RWPE1 (cell line): ENCODE measurements at regions of chr10 and their contacts with region 1.

Region 1: DNA sequence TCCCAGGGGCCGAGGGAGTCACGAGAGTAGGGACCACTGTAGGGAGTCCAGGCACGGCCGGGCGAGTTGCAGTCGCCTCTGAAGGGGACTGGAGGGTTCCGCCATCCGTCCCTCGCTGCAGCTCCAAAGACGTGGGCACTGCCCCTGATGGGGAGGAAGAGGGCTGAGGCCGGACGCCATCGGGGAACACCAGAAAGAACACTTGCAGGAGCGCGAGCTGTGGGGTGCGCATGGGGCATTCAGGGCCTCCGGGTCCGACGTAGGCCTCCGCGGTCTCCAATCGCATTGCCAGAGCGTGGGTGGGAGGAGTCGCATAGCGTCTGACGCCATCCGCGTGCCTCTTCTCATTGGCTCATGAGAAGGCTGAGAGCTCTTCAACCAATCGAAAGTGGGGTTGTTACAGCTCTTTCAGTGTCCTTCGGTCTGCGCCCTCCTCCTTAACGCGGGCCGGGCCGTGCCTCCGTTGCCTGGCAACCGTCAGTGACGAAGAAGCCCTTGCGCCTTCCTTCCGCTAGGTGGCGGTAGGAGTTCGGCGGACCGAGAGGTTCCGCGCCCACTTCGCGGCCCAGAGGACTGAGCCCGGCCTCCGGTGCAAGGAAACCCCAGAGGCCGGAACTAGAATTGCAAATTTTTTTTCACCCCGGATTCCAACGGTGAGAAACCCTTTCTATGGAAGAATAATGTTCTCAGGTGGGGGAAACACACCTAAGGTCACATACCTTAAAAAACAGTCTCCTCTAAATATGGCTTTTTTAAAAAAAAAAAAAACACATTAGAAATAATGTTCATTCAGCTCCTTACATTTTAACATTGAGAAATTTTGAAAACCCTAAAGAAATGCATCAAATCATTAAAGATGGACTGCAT is at the start of gene TCTN3:
- DNase-seq: peak; percentile 100
- H3K27ac ChIP-seq: peak within 1 kb of the TSS; percentile 65
- CTCF ChIP-seq: peak; percentile 97

Region 2: GRCh38 chr10:95440756-95441546 is 252.9 kb before region 1 on chr10:
- CTCF ChIA-PET with region 1: no interaction called
- POLR2A ChIA-PET with region 1: no interaction called
- DNase-seq: no peak
- H3K27ac ChIP-seq: no peak overlapping the region
- CTCF ChIP-seq: no peak

Region 3: DNA sequence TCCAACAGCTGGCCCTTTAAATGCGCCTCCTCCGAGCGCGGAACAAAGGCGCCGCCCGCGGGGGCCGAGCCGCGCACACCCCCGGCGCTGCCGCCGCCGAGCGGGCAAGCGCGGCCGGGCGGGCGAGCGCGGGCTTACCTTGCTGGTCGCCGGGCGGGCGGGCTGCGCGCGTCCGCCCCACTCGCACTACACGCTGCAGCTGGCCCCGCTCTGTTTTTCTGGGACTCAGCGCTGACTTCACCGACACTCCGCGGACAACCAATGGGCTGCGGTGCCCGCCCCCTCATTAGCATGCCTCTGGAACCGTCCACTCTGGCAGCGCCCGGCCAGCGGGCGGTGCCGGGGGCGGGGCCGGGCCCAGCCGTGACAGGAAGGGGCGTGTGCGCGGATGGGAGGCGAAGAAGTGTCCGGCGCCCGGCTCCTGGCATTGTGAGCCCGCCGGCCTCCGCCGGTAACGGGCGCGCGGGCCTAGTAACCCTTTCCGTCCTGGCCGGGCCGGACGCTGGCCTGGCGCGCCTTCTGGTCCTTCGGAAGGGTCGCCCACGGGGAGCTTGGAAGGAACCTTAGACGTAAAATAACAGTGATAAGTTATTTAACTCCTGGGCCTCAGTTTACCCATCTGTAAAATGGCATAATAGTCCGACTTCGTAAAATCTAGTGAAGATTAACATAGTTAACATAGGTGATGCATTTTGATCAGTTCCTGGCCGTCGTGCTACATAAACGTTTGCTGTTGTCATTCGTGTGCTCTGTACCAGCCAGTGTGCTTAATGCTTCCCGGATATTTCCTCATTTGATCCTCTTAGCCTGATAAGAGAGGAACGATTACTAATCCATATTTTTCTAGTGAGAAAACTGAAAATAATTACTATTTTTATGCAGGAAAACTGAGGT is 132.5 kb before region 1 on chr10 and contains the start of gene SORBS1:
- CTCF ChIA-PET with region 1: no interaction called
- POLR2A ChIA-PET with region 1: no interaction called
- DNase-seq: peak; percentile 98
- H3K27ac ChIP-seq: peak within 1 kb of the TSS; percentile 62
- CTCF ChIP-seq: no peak

Region 4: GRCh38 chr10:95706986-95707385 is 13.1 kb after region 1 on chr10:
- CTCF ChIA-PET with region 1: interaction called, 12 read pairs
- POLR2A ChIA-PET with region 1: interaction called, 3 read pairs
- DNase-seq: no peak
- H3K27ac ChIP-seq: no peak overlapping the region
- CTCF ChIP-seq: no peak

Region 5: GRCh38 chr10:95767884-95768556 is 74.1 kb after region 1 on chr10:
- CTCF ChIA-PET with region 1: no interaction called
- POLR2A ChIA-PET with region 1: no interaction called
- DNase-seq: no peak
- H3K27ac ChIP-seq: no peak overlapping the region
- CTCF ChIP-seq: no peak

Region 6: GRCh38 chr10:95841661-95842498 is 148.0 kb after region 1 on chr10:
- CTCF ChIA-PET with region 1: interaction called, 16 read pairs
- POLR2A ChIA-PET with region 1: no interaction called
- DNase-seq: peak; percentile 43
- H3K27ac ChIP-seq: no peak overlapping the region
- CTCF ChIP-seq: peak; percentile 34

Region 7: DNA sequence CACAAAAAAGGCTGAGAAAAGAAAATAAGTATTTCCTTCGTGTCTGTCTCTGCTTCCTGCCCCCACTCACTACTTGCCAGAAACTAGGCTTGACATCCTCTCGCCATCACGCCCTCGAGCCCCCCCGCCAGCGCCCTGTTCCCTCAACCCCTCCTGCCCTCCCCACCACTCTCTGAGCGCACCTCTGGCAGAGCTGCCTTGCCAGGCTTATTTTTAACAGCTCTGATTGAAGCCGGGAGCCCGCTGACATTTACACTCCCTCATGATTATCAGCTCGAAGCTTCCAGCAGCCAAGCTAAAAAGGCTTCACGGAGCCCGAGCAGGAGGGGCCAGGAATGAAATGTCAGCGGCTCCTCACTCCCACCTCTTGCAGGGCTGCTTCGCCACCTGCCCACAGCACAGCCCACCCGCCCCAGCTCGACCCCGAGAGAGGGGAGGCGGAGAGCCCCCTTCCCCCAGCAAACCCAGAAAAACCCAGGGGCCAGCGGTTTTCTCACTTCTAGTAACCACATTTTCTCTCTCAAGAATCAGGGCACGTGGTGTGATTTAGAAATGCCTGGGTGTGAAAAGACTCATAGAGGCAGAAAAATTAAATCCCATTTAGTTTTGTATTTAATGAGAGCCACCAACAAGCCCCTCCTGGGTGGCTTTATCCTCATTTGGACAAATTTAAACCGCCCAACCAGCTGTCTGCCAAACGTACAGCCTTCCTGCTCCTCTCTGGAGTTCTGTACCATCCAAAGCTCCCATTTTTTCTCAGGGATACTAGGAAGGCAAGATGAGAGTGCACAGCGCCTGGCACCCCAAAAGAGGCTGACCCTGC is 1402.6 kb after region 1 on chr10:
- CTCF ChIA-PET with region 1: interaction called, 11 read pairs
- POLR2A ChIA-PET with region 1: no interaction called
- DNase-seq: no peak
- H3K27ac ChIP-seq: no peak overlapping the region
- CTCF ChIP-seq: no peak